ENCODE measurements at regions of chr1 and their contacts with region 1.

Region 1: DNA sequence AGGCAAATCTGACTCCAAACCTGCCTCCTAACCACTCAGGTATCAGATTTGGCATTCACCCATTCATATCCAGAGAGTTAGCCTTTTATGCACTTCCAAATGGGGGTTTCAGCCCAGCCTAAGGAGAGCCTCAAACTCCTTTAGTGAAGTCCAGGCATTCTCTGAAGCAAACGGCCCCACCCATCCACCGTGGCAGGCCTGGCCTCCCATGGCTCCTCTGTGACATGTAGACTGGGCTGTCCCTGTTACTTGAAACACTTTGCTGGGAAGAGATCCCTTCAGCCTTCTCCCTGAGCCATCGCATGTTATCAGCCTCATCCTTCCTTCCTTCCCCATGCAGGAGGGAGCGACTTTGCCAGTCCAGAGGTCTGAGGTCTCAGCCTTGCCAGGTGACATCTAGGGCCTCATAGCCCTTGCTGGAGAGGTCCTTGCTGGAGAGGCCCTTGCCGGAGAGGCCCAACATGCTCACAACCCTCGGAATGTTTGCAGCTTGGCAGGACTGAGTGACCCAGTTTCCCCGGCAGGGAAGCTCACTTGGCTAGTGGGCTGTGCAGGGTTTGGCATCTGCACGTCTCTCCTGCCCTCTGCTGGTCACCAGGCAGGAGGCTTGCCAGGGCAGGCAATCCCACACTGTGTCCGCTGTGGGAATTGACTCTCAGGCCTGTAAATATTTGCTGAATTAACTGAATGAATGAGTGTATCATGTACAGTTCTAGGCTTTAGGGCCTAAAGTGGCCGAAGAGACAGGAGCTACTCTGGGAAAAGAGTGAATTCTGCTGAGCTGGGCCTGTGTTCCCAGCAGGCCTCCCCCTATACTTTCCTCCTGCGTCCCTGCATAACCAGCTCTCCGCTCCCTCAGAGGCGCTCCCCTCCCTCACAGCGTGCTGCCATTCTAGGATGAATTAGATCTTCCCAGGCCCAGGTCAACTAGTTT is 26.7 kb upstream of the RBM15 start:
- DNase-seq: peak; percentile 81
- ATAC-seq: peak; percentile 98
- H3K4me3 ChIP-seq: no peak overlapping the region
- H3K27ac ChIP-seq: no peak overlapping the region
- H3K4me1 ChIP-seq: no peaks in the 10 kb centered on the region
- H3K27me3 ChIP-seq: no peaks in the 10 kb centered on the region
- CTCF ChIP-seq: peak; percentile 95

Region 2: DNA sequence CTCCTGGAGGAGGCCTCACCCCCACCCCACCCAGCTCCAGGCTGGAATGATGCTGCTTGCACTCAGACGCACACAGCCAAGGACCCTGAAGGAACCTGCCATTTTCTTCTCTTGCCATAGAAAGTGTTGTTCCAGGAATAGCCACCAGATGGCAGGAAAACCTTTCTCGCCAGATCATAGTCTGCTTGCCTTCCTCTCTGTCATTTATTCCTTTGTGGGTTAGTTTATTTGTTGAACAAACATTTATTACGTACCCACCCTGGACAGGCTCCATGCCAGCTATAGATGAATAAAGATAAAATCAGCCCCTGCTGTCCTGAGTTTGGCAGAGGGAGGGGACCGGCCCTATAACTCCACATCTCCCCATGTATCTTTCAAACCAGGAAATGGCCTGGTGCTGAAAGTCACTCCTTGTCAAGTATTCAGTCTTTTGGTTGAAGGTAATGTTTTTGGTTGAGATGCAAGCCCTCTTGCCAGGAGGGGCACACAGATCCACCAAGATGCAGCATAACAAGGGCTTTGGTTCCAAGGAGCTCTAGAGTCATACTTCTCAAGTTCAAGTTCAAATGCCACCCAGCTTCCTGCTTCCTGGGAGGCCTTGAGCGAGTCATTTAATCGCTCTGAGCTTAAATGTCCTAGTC is 109.3 kb before region 1 on chr1:
- CTCF ChIA-PET with region 1: interaction called, 53 read pairs
- POLR2A ChIA-PET with region 1: no interaction called
- intact Hi-C with region 1: loop called (anchors 1 kb)
- DNase-seq: peak; percentile 94
- ATAC-seq: peak; percentile 72
- H3K4me3 ChIP-seq: no peak overlapping the region
- H3K27ac ChIP-seq: peak overlapping the region; percentile 51
- H3K4me1 ChIP-seq: peaks cover 10% of the 10 kb centered on the region
- H3K27me3 ChIP-seq: no peaks in the 10 kb centered on the region
- CTCF ChIP-seq: peak; percentile 92

Region 3: DNA sequence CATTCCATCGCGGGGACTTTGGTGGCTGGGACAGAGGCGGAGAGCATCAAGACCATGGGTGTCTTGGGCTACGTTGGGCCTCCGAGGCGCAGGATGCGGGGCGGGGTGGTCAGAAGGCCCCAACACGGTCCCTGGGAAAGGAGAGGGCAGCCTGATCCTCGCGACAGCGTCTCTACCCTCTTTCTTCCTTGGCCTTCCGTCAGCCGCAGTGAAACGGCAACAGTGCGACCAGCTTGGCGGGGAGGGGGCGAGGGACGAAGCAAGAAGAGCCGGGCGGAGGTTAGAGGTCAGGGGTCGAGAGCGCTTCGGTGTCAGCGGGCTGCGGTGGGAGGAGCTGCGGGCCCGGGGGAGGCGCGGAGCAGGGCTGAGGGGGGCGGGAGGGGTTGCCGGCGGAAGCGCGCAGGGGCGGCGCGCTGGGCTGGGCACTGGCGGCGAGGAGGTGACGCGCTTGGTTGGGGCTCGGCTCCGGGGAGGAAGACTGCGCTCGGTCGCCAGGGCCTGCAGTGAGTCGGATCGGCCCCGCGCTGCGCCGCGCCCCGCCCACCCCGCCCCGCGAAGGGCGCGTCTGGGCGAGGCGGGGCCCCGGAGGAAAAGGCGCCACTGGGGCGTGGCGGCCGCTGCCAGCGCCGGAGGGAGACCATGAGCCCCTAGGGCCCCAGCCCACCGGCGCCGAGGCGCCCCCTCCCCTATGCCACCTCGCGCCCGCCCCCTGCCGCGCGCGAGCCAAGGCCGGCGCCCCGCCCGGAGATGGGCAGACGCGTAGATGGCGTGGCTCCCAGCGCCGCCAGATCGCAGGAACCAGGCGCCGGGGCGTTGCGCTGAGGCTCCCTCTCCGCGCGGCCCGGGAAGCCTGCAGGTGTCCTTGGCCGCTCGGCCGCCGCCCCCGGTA is 102.5 kb before region 1 on chr1 and contains the start of gene KCNC4:
- CTCF ChIA-PET with region 1: interaction called, 53 read pairs
- POLR2A ChIA-PET with region 1: no interaction called
- intact Hi-C with region 1: loop called (anchors 1 kb)
- DNase-seq: peak; percentile 79
- ATAC-seq: peak; percentile 78
- H3K4me3 ChIP-seq: peak within 1 kb of the TSS; percentile 83
- H3K27ac ChIP-seq: no peak within 1 kb of the TSS
- H3K4me1 ChIP-seq: peaks cover 30% of the 10 kb centered on the region; the same call in 1 of the 2 replicates
- H3K27me3 ChIP-seq: no peaks in the 10 kb centered on the region
- CTCF ChIP-seq: no peak
- total RNA-seq, gene KCNC4: 1.6 and 3.6 TPM in 2 replicates